ENCODE measurements at regions of chr17 and their contacts with region 1.

Region 1: GRCh38 chr17:63722403-63722802 is 19.2 kb downstream of the STRADA start:
- DNase-seq: no peak
- H3K4me3 Mint-ChIP-seq: no peak overlapping the region
- H3K27ac Mint-ChIP-seq: no peak overlapping the region
- H3K4me1 Mint-ChIP-seq: peaks cover 1% of the 10 kb centered on the region
- H3K27me3 Mint-ChIP-seq: no peaks in the 10 kb centered on the region

Region 2: DNA sequence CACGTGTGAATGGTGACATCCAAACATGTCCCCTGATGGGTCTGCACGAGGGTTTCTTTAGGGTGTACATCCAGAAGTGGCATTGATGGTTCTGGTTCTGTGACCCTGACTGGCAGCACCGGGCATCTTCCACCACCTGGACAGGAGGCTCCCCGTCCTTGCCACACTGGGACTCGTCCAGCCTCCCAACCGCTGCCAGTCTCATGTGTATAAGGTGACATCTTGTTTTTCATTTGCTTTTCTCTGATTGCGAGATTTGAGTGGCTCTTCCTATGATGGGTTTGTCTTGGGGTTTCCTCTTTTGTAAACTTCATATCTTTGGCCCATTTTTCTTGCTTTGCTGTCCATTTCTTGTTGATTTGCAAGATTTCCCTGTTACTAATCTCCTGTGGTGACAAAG is 13.3 kb before region 1 on chr17:
- intact Hi-C with region 1: loop called (anchors 2 kb)
- DNase-seq: no peak
- H3K4me3 Mint-ChIP-seq: no peak overlapping the region
- H3K27ac Mint-ChIP-seq: no peak overlapping the region
- H3K4me1 Mint-ChIP-seq: peaks cover 44% of the 10 kb centered on the region
- H3K27me3 Mint-ChIP-seq: no peaks in the 10 kb centered on the region

Region 3: GRCh38 chr17:64063766-64064224 is 341.4 kb after region 1 on chr17:
- intact Hi-C with region 1: no loop called
- DNase-seq: peak; percentile 84
- H3K4me3 Mint-ChIP-seq: no peak overlapping the region
- H3K27ac Mint-ChIP-seq: peak overlapping the region; percentile 37
- H3K4me1 Mint-ChIP-seq: peaks cover 72% of the 10 kb centered on the region
- H3K27me3 Mint-ChIP-seq: no peaks in the 10 kb centered on the region

Measured in activated CD4-positive, alpha-beta T cell treated with anti-CD3 and anti-CD28 coated beads, Interleukin-2, amount 10 ng/mL, durations not matched to agents 24 days and 14 days (primary cell).